PC-3 (cell line): ENCODE measurements at regions of chr18 and their contacts with region 1.

Region 1: DNA sequence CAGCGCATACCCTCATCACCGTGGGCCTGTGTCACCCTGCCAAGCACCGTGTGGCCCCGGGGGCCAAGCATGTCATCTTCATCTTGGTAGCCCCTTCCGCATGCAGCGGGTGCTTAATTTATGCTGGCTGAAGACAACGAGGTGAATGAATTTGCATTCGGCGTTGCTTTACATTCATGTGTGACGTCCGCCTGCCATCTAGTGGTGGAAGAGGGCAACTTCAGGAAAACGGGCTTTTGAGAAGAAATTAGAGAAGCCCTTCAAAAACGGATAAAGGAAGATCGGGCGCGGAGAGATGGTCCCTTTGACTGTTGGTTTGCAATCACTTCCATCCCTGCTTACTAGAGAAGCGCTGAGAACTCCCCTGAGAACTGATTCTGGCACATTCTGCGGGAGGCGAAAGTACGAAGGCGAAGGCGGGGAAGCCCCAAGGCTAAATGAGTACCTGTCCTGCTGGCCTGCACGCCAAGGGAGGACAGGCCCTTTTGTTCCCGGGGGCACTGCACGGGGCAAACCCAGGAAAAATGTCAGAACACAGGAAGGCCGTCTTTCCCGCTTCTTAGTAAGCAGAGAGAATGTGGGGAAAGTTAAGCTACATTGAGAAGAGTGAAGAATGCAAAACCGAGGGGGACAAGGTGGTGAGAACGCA is 145.9 kb downstream of the ZNF516 start:
- DNase-seq: peak; percentile 82
- ATAC-seq: peak; percentile 48
- H3K4me3 ChIP-seq: peak overlapping the region; percentile 58
- H3K27ac ChIP-seq: no peak overlapping the region
- H3K4me1 ChIP-seq: peaks cover 4% of the 10 kb centered on the region; the same call in 1 of the 2 replicates
- H3K27me3 ChIP-seq: 0 out of 2 replicates have a peak, but pooled peaks cover 13% of the 10 kb centered on the region
- CTCF ChIP-seq: peak; percentile 85

Region 2: DNA sequence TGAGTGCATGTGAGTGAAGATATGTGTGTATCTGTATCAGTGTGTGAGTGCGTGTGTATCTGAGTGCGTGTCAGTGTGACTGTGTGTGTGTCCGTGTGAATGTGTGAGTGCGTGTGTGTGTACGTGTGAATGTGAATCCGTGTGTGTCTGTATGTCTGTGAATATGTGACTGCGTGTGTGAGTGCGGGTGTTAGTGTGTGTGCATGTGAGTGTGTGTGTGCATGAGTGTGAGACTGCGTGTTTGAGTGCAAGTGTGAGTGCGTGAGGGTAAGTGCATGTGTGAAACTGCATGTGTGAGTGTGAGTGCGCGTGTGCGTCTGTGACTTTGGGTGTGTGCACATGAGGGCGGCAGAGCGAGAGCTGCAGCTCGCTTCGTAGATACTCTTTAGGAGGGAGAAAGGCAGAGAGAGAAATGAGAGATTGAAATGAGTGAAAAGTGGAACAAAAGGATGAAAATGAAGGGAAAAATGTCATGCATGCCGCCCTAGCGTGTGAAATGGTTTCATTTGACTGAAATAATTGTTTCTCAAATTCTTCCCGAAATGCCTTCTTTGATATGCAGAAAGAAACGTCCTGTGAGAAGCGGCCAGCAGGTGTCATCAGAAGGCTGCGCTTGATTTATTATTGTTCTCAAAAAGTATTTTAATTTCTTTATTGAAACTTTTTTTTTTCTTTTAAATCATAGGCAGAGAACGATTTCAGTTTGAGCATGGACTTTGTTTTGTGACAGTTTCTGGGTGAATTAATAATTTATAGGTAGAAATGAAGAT is 1726.0 kb before region 1 on chr18:
- CTCF ChIA-PET with region 1: no interaction called
- POLR2A ChIA-PET with region 1: no interaction called
- intact Hi-C with region 1: loop called (anchors 10 kb)
- DNase-seq: peak; percentile 40
- ATAC-seq: peak; percentile 56; the same call in 1 of the 2 replicates
- H3K4me3 ChIP-seq: 0 out of 2 replicates have a peak overlapping the region, but pooled peaks have one; percentile 38
- H3K27ac ChIP-seq: no peak overlapping the region
- H3K4me1 ChIP-seq: peaks cover 3% of the 10 kb centered on the region; the same call in 1 of the 2 replicates
- H3K27me3 ChIP-seq: no peaks in the 10 kb centered on the region
- CTCF ChIP-seq: peak; percentile 76

Region 3: DNA sequence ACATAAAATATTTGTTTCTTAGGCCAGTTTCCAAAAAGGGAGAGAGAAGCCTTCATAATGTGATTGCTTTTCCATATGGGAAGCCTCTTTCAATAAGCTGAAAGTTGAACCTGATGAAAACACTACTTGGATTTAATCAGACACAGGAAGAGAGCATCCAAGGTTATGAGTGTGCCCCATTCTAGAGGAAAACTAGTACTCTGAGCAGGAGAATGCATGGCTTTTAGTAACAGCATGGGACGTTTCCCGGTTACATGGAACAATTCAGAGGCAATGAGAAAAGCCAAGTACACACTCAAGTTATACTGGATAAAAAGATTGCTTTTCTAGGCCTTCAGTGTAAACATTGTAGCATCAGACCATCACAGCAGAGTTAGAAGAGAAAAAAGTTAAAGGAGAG is 169.9 kb before region 1 on chr18:
- CTCF ChIA-PET with region 1: no interaction called
- POLR2A ChIA-PET with region 1: no interaction called
- intact Hi-C with region 1: no loop called
- DNase-seq: no peak
- ATAC-seq: no peak
- H3K4me3 ChIP-seq: no peak overlapping the region
- H3K27ac ChIP-seq: no peak overlapping the region
- H3K4me1 ChIP-seq: no peaks in the 10 kb centered on the region
- H3K27me3 ChIP-seq: peaks cover 38% of the 10 kb centered on the region
- CTCF ChIP-seq: no peak